Pancreas (tissue), 10 donors: ENCODE measurements at regions of chr15 and their contacts with region 1.

Region 1: DNA sequence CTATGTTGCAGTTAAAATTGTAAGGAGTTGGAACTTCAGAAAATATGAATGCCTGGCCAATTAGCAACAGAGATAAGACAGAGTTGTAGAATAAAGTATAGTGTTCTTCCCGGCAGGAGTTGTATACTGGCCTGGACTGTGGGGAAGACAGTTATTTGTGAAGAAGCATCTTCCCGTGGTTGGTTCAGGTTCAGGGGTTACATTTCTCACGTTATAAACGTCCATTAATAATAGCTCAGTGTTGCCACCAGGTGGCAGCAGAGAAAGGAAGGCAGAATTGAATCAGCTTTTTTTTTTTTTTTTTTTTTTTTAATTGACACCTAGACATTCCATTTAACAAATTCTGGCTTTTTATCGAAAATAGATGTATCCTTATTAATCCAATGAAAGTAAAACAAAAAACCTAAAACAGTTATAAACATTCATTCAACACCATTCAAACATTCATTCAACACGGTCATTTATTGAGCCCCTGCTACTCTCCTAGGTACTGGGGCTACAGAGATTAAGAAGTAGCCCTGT is 66.4 kb upstream of the NR2E3 start:
- DNase-seq: peak in 5 of 6 donors; percentile 40 to 74 (median 66)
- ATAC-seq: peak in 3 of 4 donors; percentile 37 to 72 (median 70)
- H3K4me3 ChIP-seq: no peak overlapping the region
- H3K27ac ChIP-seq: no peak overlapping the region
- H3K4me1 ChIP-seq: no peaks in the 10 kb centered on the region
- H3K27me3 ChIP-seq: no peaks in the 10 kb centered on the region
- CTCF ChIP-seq: peak; percentile 41 to 75 (median 70)

Region 2: GRCh38 chr15:71800835-71801745 is 57.2 kb after region 1 on chr15:
- intact Hi-C with region 1: loop called in 2 of 3 experiments (anchors 5 kb)
- DNase-seq: peak in 2 of 6 donors; percentile 24 to 72
- ATAC-seq: peak; percentile 82 to 93 (median 92)
- H3K4me3 ChIP-seq: no peak overlapping the region
- H3K27ac ChIP-seq: no peak overlapping the region
- H3K4me1 ChIP-seq: no peaks in the 10 kb centered on the region
- H3K27me3 ChIP-seq: no peaks in the 10 kb centered on the region
- CTCF ChIP-seq: peak; percentile 63 to 79 (median 71)

Region 3: GRCh38 chr15:71997691-71998090 is 253.8 kb after region 1 on chr15:
- intact Hi-C with region 1: no loop called
- DNase-seq: no peak
- ATAC-seq: no peak
- H3K4me3 ChIP-seq: no peak overlapping the region
- H3K27ac ChIP-seq: no peak overlapping the region
- H3K4me1 ChIP-seq: no peaks in the 10 kb centered on the region
- H3K27me3 ChIP-seq: no peaks in the 10 kb centered on the region
- CTCF ChIP-seq: no peak

Region 4: DNA sequence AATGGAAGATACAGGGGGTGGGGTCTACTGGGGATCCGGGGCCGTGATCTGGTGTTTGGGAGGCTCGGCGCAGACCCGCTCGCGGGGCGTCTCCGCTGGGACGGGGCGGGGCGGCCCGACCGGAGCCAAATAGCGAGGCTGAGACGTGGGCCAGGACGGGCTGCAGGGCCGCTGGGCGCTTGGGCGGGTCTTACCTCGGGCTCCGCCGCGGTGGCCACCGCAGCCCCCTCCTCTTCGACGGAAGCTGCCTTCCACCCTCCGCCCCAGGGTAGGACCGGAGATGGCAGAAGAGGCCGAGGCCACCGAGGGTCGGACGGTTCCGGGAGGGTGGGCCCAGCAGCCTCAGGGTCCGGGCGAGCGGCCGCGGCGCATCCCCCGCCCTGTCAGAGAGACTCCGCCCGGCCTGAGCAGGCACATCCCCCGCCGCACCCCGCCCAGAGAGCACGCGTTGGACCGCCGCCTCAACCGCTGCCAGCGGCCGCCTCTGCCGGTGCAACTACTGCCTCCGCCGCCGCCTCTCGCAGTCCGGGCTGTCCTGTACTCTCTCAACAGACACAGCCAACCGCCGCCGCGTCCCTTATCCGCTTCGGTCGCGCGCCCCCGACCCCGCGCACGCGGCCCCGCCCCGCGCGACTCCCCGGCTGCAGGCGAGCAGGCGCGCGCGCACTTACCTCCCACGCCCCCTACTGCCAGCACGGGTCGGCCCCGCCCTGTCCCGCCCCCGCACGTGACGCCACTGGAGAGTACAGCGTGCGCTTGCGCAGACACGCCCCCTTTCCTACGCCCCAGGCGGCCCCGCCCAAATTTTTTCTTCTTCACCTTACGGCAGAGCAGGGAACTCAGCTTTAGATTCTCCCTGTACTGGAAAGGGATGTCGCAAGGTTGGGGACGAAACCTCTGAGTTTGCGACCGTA is 373.8 kb after region 1 on chr15 and contains the start of gene MYO9A:
- intact Hi-C with region 1: no loop called
- DNase-seq: peak; percentile 97 to 99 (median 99)
- ATAC-seq: peak; percentile 84 to 92 (median 90)
- H3K4me3 ChIP-seq: peak within 1 kb of the TSS; percentile 88 to 96 (median 90)
- H3K27ac ChIP-seq: peak within 1 kb of the TSS; percentile 80 to 95 (median 86)
- H3K4me1 ChIP-seq: peaks cover 4 to 10% (median 4%) of the 10 kb centered on the region in 3 donors
- H3K27me3 ChIP-seq: no peaks in the 10 kb centered on the region
- CTCF ChIP-seq: no peak
- total RNA-seq, gene MYO9A: 6.6 to 21.0 (median 9.1) TPM

Region 5: GRCh38 chr15:72155635-72156616 is 412.0 kb after region 1 on chr15:
- intact Hi-C with region 1: loop called in 2 of 3 experiments (anchors 5 to 10 kb)
- DNase-seq: peak in 5 of 6 donors; percentile 79 to 92 (median 86)
- ATAC-seq: peak; percentile 88 to 95 (median 90)
- H3K4me3 ChIP-seq: peak overlapping the region; percentile 16 to 49 (median 38)
- H3K27ac ChIP-seq: peak overlapping the region; percentile 61 to 92 (median 84)
- H3K4me1 ChIP-seq: peaks cover 0 to 19% (median 10%) of the 10 kb centered on the region in 3 donors
- H3K27me3 ChIP-seq: no peaks in the 10 kb centered on the region
- CTCF ChIP-seq: peak; percentile 59 to 69 (median 66)

Region 6: GRCh38 chr15:72161361-72162260 is 417.7 kb after region 1 on chr15:
- intact Hi-C with region 1: loop called in 2 of 3 experiments (anchors 5 to 10 kb)
- DNase-seq: no peak
- ATAC-seq: no peak
- H3K4me3 ChIP-seq: no peak overlapping the region
- H3K27ac ChIP-seq: no peak overlapping the region
- H3K4me1 ChIP-seq: no peaks in the 10 kb centered on the region
- H3K27me3 ChIP-seq: no peaks in the 10 kb centered on the region
- CTCF ChIP-seq: no peak